Calu3 (cell line): ENCODE measurements at regions of chr3 and their contacts with region 1.

Region 1: GRCh38 chr3:179322286-179323196 is at the start of gene ZNF639:
- DNase-seq: peak; percentile 94
- H3K4me3 Mint-ChIP-seq: peak within 1 kb of the TSS; percentile 85
- H3K27ac Mint-ChIP-seq: peak within 1 kb of the TSS; percentile 75
- H3K4me1 Mint-ChIP-seq: peaks cover 30% of the 10 kb centered on the region
- H3K27me3 Mint-ChIP-seq: no peaks in the 10 kb centered on the region
- CTCF ChIP-seq: peak; percentile 99
- total RNA-seq, gene ZNF639: 48.0 and 52.1 TPM in 2 replicates

Region 2: DNA sequence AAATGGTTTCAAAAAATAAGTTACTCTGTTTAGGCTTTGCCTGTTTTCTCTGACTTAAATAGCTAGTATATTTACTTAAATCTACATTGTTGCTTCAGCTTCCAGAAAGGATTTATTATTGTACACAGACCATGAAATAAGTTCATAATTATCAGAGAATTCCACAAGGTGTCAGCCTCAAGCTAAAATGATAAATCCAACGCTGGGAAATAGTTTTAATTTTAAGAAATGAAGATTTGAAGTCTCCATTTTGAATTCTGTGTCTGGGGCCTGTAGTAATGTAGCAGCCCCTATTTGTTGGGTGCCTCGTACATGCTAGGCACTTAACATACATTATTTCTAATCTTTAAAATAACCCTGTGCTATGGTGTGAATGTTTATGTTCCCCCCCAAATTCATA is 878.9 kb before region 1 on chr3:
- CTCF ChIA-PET with region 1: no interaction called
- intact Hi-C with region 1: loop called (anchors 5 kb)
- DNase-seq: no peak
- H3K4me3 Mint-ChIP-seq: no peak overlapping the region
- H3K27ac Mint-ChIP-seq: no peak overlapping the region
- H3K4me1 Mint-ChIP-seq: no peaks in the 10 kb centered on the region
- H3K27me3 Mint-ChIP-seq: no peaks in the 10 kb centered on the region
- CTCF ChIP-seq: no peak

Region 3: GRCh38 chr3:178966299-178967176 is 356.0 kb before region 1 on chr3:
- CTCF ChIA-PET with region 1: no interaction called
- intact Hi-C with region 1: loop called (anchors 5 kb)
- DNase-seq: no peak
- H3K4me3 Mint-ChIP-seq: no peak overlapping the region
- H3K27ac Mint-ChIP-seq: no peak overlapping the region
- H3K4me1 Mint-ChIP-seq: peaks cover 15% of the 10 kb centered on the region
- H3K27me3 Mint-ChIP-seq: no peaks in the 10 kb centered on the region
- CTCF ChIP-seq: peak; percentile 74

Region 4: GRCh38 chr3:179015551-179016020 is 307.0 kb before region 1 on chr3:
- CTCF ChIA-PET with region 1: no interaction called
- intact Hi-C with region 1: loop called (anchors 1 kb)
- DNase-seq: peak; percentile 78
- H3K4me3 Mint-ChIP-seq: no peak overlapping the region
- H3K27ac Mint-ChIP-seq: no peak overlapping the region
- H3K4me1 Mint-ChIP-seq: peaks cover 8% of the 10 kb centered on the region
- H3K27me3 Mint-ChIP-seq: no peaks in the 10 kb centered on the region
- CTCF ChIP-seq: peak; percentile 93

Region 5: DNA sequence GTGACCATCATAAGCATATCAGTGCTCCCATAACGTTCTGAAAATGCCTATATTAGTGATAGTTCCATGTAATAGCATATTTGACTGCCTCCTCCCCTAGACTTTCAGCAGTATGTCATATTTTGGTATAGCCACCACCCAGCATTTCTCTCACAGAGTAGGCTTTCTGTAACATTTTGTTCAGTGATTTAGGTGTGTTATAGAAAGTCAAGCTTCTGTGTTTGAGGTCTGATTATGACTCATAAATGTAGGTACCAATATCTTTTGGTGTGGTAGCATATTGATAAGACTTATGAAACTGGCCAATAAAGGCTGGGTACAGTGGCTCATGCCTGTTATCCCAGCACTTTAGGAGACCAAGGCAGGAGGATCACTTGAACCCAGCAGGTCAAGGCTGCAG is 216.7 kb before region 1 on chr3:
- CTCF ChIA-PET with region 1: interaction called, 3 read pairs
- intact Hi-C with region 1: loop called (anchors 1 kb)
- DNase-seq: no peak
- H3K4me3 Mint-ChIP-seq: no peak overlapping the region
- H3K27ac Mint-ChIP-seq: no peak overlapping the region
- H3K4me1 Mint-ChIP-seq: no peaks in the 10 kb centered on the region
- H3K27me3 Mint-ChIP-seq: no peaks in the 10 kb centered on the region
- CTCF ChIP-seq: no peak

Region 6: DNA sequence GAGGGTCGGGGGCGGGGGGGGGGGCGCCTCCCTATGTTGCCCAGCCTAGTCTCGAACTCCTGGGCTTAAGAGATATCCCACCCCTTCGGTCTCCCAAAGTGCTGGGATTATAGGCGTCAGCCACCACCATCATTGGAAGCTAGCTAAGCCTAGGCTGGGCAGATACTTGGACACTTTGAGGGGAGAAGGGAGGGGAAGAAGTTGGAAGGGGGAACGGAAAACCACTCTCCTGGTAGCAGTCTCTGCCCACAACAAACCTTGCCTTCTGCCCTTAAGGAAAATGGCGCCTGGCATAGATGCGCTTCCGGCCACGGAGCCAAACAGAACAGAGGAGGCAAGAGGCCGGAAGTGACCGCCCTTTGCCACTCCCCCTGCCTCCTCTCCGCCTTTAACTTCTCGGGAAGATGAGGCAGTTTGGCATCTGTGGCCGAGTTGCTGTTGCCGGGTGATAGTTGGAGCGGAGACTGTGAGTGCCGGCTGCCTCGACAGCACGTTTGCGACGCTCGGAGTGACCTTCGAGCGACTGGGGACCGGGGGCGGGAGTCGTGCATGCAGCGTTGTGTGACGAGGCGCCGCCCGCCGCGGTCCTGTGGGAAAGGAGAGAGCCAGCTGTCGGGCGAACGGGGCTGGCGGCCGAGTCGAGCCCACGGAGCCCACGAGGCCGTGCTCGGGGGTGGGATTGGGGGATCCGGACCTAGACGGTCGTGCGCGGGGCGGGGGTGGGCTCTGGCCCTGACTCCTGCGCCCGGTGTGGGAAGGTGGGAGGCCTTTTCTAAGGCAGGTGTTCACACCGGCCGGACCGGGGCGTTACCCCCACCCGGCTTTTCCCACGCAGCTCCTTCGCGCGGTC is 25.0 kb after region 1 on chr3 and contains the start of gene MFN1:
- CTCF ChIA-PET with region 1: interaction called, 6 read pairs
- intact Hi-C with region 1: loop called (anchors 2 kb)
- DNase-seq: peak; percentile 95
- H3K4me3 Mint-ChIP-seq: peak within 1 kb of the TSS; percentile 99
- H3K27ac Mint-ChIP-seq: peak within 1 kb of the TSS; percentile 96
- H3K4me1 Mint-ChIP-seq: peaks cover 7% of the 10 kb centered on the region
- H3K27me3 Mint-ChIP-seq: no peaks in the 10 kb centered on the region
- CTCF ChIP-seq: no peak
- total RNA-seq, gene MFN1: 79.9 and 86.2 TPM in 2 replicates